Ovary (tissue), 10 donors: ENCODE measurements at regions of chr2 and their contacts with region 1.

Region 1: GRCh38 chr2:25342372-25343186 is 854 bp upstream of the DNMT3A start:
- DNase-seq: peak; percentile 78 to 87 (median 83)
- H3K4me3 ChIP-seq: peak overlapping the region; percentile 73
- H3K27ac ChIP-seq: peak overlapping the region; percentile 75 to 77
- H3K4me1 ChIP-seq: peaks cover 6% of the 10 kb centered on the region
- H3K27me3 ChIP-seq: no peaks in the 10 kb centered on the region
- CTCF ChIP-seq: peak; percentile 86 to 99 (median 97)
- EP300 ChIP-seq: no peak
- POLR2A ChIP-seq: peak; percentile 38

Region 2: GRCh38 chr2:25286025-25286400 is 56.6 kb before region 1 on chr2:
- intact Hi-C with region 1: loop called in 2 of 4 experiments (anchors 10 kb)
- DNase-seq: no peak
- H3K4me3 ChIP-seq: no peak overlapping the region
- H3K27ac ChIP-seq: no peak overlapping the region
- H3K4me1 ChIP-seq: peaks cover 12% of the 10 kb centered on the region
- H3K27me3 ChIP-seq: no peaks in the 10 kb centered on the region
- CTCF ChIP-seq: no peak
- EP300 ChIP-seq: no peak
- POLR2A ChIP-seq: no peak

Region 3: DNA sequence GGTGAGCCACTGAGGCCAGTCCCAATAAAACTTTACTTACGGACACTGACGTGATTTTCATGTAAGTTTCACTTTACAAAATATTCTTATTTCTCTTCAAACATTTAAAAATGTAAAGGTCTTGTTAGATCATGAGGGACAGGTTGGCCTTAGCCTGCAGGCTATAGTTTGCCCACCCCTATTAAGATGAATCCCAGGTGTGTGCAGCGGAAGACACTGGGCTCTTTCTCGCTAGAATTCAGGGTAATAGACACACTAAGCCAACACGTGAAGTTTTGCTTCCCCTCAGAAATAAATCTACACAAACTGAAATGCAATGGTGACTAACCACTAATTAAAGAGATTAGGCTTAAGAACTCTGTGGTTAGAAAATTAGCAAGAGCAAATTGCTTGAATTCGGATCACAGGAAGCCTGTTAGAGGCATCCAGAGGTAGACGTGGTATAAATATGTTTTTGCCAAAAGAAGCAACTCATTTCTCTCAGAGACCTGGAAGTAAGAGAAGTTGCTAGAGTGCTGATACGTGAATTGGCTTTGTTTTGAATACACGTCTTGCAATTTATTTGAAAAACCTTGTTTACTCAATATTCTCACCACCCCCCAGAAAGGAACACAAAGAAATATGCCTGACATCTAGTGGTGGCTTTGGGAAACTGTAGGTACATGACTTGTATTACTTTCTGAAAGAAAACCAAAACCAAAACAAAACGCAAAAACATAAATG is 179.2 kb after region 1 on chr2:
- intact Hi-C with region 1: loop called in 1 of 4 experiments (anchors 10 kb)
- DNase-seq: no peak
- H3K4me3 ChIP-seq: peak overlapping the region; percentile 26
- H3K27ac ChIP-seq: no peak overlapping the region
- H3K4me1 ChIP-seq: peaks cover 2% of the 10 kb centered on the region
- H3K27me3 ChIP-seq: no peaks in the 10 kb centered on the region
- CTCF ChIP-seq: peak; percentile 62 to 88 (median 84)
- EP300 ChIP-seq: no peak
- POLR2A ChIP-seq: no peak